HEK293T (cell line): ENCODE measurements at regions of chr12 and their contacts with region 1.

Region 1: DNA sequence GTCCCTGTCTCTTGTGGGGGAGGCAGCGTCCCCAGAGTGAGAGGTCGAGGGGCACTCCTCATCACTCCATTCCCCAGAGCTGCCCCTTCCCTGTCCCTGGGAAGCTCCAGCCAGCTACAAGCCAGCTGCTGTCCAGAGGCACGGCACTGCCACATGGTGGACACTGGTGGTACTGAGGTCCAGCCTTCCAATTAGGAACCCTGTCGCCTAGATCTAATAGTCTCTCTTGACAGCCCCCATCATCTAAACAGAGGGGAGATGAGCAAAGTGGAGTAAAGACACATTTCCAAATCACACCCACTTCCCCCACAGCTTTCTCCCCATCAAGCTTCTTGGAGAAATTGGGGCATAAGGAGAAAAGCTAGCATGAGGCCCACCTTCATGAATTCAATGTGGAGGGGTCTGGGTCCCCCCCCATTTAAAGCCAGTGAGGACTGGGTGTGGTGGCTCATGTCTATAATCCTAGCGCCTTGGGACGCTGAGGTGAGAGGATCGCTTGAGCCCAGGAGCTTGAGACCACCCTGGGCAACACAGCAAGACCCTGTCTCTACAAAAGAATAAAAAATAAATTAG is 2.1 kb upstream of the INHBE start:
- DNase-seq: peak; percentile 77

Region 2: DNA sequence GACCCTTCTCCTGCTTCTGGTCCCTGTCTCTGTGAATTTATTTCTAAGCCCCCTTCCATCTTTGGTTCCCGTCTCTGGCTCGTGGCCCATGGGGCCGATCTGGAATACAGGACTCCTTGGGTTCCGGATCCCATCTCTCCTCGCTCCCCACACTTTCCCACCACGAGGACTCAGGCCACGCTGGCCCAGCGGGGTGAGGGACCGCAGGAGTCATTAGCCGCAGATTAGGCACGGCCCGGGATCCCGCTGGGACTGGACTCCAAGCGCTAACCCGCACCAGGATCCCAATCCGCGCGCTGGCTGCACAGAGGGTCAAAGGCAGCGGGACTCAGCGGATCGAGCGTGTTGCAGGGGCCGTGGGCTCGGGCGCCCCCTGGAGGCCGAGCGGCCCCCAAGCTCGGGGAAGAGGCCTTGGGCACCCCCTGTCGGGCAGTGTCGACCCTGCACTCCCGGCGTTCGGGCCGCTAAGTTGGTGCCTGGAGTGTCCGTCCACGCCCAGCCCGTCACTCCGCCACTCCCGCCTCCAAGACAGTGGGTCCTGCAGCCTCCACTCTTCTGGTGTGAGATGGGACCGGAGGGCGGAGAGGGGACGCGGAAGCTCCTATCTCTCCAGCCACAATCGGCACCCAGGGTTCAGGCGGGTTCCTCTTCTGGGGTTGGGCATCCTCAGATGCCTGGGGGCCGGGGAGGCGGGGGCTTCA is 214.0 kb before region 1 on chr12:
- CTCF ChIA-PET with region 1: interaction called, 12 read pairs
- POLR2A ChIA-PET with region 1: interaction called, 6 read pairs
- DNase-seq: peak; percentile 91

Region 3: GRCh38 chr12:57261428-57261865 is 191.6 kb before region 1 on chr12:
- CTCF ChIA-PET with region 1: interaction called, 15 read pairs
- POLR2A ChIA-PET with region 1: interaction called, 7 read pairs
- DNase-seq: no peak

Region 4: DNA sequence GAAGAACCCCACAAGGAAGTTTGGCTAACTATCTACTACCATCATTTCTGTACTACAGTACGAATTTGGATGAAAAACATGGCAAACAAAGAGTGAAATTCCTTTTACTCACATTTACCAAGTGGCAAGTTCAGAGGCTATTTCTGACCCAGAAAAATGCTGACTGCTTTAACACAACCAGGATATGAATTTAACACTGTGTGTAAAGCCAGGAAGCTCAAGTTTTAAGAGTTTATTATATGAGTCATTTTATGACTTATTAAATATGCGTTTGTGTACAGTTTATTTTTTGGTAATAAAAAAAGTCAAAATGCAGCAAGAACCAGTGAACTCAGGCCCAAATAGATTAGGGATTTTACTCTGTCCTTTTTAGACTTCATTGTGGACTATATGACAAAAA is 143.6 kb before region 1 on chr12:
- CTCF ChIA-PET with region 1: interaction called, 34 read pairs
- POLR2A ChIA-PET with region 1: interaction called, 20 read pairs
- DNase-seq: no peak

Region 5: DNA sequence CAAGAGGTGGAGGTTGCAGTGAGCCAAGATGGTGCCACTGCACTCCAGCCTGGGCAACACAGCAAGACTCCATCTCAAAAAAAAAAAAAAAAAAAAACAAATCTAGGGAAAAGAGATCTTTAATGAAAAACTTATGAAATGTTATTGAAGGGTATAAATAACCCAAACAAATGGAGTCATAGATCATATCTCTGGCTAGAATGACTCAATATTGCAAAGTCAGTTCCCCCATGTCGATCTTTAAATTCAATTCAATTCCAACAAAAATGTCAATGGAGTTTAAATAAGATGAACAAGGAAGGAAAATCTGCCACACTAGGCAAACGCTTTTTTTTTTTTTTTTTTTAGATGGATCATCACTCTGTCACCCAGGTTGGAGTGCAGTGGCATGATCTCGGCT is 100.9 kb before region 1 on chr12:
- CTCF ChIA-PET with region 1: no interaction called
- POLR2A ChIA-PET with region 1: no interaction called
- DNase-seq: no peak

Region 6: GRCh38 chr12:57430931-57431720 is 21.9 kb before region 1 on chr12 and contains the start of gene R3HDM2:
- CTCF ChIA-PET with region 1: interaction called, 7 read pairs
- POLR2A ChIA-PET with region 1: interaction called, 27 read pairs
- DNase-seq: peak; percentile 97